ENCODE measurements at regions of chr19 and their contacts with region 1.

Region 1: DNA sequence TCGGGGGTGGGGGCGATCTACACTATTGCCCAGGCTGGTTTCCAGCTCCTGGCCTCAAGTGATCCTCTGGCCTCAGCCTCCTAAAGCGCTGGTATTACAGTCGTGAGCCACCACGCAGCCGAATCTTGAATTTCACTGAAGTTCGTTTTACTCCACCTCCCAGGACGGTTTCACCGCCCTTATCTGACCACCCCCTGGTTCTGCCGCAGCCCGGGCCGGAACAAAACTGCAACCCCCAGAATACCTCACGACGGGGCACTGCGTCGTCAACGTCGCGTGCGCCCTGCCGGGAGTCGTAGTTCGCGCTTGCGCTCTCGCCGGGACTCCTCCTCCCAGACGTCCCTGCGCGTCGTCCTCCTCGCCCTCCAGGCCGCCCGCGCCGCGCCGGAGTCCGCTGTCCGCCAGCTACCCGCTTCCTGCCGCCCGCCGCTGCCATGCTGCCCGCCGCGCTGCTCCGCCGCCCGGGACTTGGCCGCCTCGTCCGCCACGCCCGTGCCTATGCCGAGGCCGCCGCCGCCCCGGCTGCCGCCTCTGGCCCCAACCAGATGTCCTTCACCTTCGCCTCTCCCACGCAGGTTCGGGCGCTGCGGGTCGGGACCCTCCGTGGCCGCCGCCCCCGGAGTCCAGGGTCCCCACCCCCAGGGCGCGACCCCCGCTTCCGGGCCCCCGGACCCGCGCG is at the start of gene ATP5F1D:
- DNase-seq: peak; percentile 93
- H3K4me3 ChIP-seq: peak within 1 kb of the TSS; percentile 85 to 91
- H3K27ac ChIP-seq: peak within 1 kb of the TSS; percentile 55 to 83
- H3K4me1 ChIP-seq: peaks cover 22 to 51% of the 10 kb centered on the region in 2 experiments; a peak in 3 of 4 replicates
- H3K27me3 ChIP-seq: no peaks in the 10 kb centered on the region
- CTCF ChIP-seq: no peak
- EP300 ChIP-seq: no peak
- RAD21 ChIP-seq: no peak
- polyA plus RNA-seq, gene ATP5F1D: 133 and 226 TPM in 2 replicates

Region 2: GRCh38 chr19:1020868-1021425 is 220.6 kb before region 1 on chr19 and contains the start of gene TMEM259:
- CTCF ChIA-PET with region 1: interaction called, 11 read pairs
- POLR2A ChIA-PET with region 1: interaction called, 4 read pairs
- DNase-seq: peak; percentile 99
- H3K4me3 ChIP-seq: peak within 1 kb of the TSS; percentile 69 to 79
- H3K27ac ChIP-seq: peak within 1 kb of the TSS; percentile 73 to 91
- H3K4me1 ChIP-seq: peaks cover 13 to 26% of the 10 kb centered on the region in 2 experiments; a peak in 1 of 4 replicates
- H3K27me3 ChIP-seq: no peaks in the 10 kb centered on the region
- CTCF ChIP-seq: no peak
- EP300 ChIP-seq: no peak; a peak in 1 of 4 replicates
- RAD21 ChIP-seq: no peak
- polyA plus RNA-seq, gene TMEM259: 138 and 145 TPM in 2 replicates

Region 3: DNA sequence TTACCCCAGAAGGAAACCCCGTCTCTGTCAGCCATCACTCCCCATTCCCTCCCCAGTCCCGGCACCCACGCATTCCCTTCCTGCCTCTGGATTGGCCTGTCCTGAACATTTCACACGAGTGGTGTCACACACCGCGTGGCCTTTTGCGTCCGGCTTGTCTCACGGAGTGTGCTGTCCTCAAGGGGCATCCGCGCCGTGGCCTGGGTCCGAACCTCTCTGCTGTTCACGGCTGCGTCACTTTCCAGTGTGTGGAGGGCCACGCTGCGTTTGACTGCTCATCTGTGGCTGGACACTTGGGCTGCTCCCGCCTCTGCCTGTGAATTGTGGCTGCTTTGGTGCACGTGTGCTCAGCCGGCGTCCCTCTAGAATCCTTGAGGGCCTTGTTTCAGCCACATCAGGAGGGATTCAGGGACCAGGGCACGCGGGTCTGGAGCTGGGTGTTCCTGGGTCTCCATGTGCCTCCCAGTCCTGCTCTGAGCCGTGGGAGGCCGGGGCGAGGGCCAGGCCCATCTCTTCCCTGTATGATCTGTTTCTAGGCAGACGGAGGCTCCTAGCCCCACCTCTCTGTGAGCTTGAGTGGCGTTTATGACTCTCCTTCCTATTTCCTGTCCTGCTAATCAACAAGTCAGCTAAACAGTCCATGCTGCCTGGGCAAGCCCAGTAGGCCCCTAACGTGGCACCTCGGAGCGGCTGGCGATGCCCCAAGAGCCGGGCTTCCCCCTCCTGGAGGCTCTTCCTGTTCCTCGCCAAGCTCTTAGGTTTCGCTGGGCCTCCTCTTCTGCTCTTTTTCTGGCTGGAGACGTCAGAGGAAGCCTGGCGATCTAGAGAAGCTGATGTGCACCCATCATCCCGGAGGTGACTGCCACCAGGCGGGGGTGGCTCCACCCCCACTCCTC is 27.9 kb before region 1 on chr19:
- CTCF ChIA-PET with region 1: interaction called, 75 read pairs
- POLR2A ChIA-PET with region 1: interaction called, 3 read pairs
- DNase-seq: peak; percentile 57
- H3K4me3 ChIP-seq: 0 out of 4 replicates have a peak overlapping the region, but pooled peaks of 1 of the 2 experiments have one; percentile 13
- H3K27ac ChIP-seq: peak overlapping the region; percentile 90 to 92
- H3K4me1 ChIP-seq: peaks cover 35 to 39% of the 10 kb centered on the region in 2 experiments; a peak in 3 of 4 replicates
- H3K27me3 ChIP-seq: no peaks in the 10 kb centered on the region
- CTCF ChIP-seq: no peak
- EP300 ChIP-seq: no peak
- RAD21 ChIP-seq: no peak

Region 4: GRCh38 chr19:1223018-1223855 is 18.3 kb before region 1 on chr19:
- CTCF ChIA-PET with region 1: interaction called, 82 read pairs
- POLR2A ChIA-PET with region 1: interaction called, 6 read pairs
- DNase-seq: peak; percentile 76
- H3K4me3 ChIP-seq: no peak overlapping the region; a peak in 1 of 4 replicates
- H3K27ac ChIP-seq: no peak overlapping the region; a peak in 1 of 4 replicates
- H3K4me1 ChIP-seq: peaks cover 0 to 5% of the 10 kb centered on the region in 2 experiments; a peak in 1 of 4 replicates
- H3K27me3 ChIP-seq: no peaks in the 10 kb centered on the region
- CTCF ChIP-seq: peak; percentile 61
- EP300 ChIP-seq: no peak
- RAD21 ChIP-seq: peak; percentile 39; the same call in 1 of the 2 replicates

Region 5: DNA sequence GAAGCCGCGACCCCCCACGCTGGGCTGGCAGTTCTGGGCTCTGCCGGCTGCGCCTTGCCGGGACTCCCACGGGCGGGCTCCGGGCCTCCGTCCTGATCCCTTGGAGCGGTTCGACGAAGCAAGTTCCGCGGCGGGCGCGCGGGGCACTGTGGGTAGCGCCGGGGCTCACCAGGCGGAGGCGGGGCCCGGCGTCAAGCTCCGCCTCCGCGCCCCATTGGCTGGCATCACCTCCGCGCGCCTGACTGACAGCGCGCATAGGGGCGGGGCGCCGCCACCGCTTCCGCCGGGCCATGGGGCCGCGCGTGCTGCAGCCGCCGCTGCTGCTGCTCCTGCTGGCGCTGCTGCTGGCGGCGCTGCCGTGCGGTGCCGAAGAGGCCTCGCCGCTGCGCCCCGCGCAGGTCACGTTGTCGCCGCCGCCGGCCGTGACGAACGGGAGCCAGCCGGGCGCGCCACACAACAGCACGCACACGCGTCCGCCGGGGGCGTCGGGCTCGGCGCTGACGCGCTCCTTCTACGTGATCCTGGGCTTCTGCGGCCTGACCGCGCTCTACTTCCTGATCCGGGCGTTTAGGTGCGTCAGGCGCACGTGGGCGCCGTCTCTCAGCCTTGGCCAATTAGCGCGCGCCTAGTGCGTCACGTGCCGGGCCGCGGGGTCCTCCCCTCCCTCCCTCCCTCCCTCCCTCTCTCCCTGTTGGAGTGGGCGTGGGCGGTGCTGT is 33.9 kb after region 1 on chr19 and contains the start of gene FAM174C:
- CTCF ChIA-PET with region 1: interaction called, 62 read pairs
- POLR2A ChIA-PET with region 1: interaction called, 8 read pairs
- DNase-seq: peak; percentile 97
- H3K4me3 ChIP-seq: peak within 1 kb of the TSS; percentile 72 to 76
- H3K27ac ChIP-seq: peak within 1 kb of the TSS; percentile 92 to 99
- H3K4me1 ChIP-seq: peaks cover 28 to 42% of the 10 kb centered on the region in 2 experiments; a peak in 1 of 4 replicates
- H3K27me3 ChIP-seq: no peaks in the 10 kb centered on the region
- CTCF ChIP-seq: no peak
- EP300 ChIP-seq: no peak
- RAD21 ChIP-seq: no peak
- polyA plus RNA-seq, gene FAM174C: 53.5 and 78.0 TPM in 2 replicates

Region 6: GRCh38 chr19:1373534-1374249 is 132.1 kb after region 1 on chr19:
- CTCF ChIA-PET with region 1: interaction called, 11 read pairs
- POLR2A ChIA-PET with region 1: no interaction called
- DNase-seq: no peak
- H3K4me3 ChIP-seq: no peak overlapping the region
- H3K27ac ChIP-seq: no peak overlapping the region
- H3K4me1 ChIP-seq: no peaks in the 10 kb centered on the region
- H3K27me3 ChIP-seq: no peaks in the 10 kb centered on the region
- CTCF ChIP-seq: no peak
- EP300 ChIP-seq: no peak
- RAD21 ChIP-seq: no peak

Region 7: DNA sequence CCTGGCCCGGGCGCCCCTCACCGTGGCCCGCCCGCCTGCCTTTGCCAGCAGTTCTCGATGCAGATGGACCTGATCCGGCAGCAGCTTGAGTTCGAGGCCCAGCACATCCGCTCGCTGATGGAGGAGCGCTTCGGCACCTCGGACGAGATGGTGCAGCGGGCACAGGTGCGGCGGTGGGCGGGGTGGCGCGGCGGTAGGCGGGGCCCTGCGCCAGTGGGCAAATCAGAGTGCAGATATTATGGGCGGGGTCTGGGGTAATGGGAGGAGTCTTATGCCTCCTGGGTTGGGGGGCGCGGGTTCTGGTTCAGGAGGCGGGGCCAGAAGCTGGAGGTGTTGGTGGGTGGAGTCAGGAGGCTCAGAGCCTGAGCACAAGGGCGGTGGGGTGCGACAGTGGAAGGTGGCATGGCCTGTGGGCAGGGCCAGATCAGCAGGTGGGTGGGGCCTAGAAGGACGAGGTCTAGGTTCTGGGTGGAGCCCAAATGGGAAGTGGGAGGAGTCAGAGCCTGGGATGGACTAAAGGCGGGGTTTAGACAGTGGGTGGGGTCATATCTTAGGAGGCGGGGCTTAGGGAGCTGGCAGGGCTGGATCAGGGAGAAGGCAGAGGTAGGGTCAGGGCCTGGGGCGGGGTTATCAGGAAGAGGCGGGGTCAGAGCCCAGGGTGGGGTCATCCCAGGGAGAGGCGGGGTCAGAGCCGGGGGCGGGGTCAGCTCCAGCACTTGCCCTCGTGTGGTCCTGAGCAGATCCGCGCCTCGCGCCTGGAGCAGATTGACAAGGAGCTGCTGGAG is 214.0 kb after region 1 on chr19:
- CTCF ChIA-PET with region 1: no interaction called
- POLR2A ChIA-PET with region 1: no interaction called
- DNase-seq: peak; percentile 94
- H3K4me3 ChIP-seq: no peak overlapping the region
- H3K27ac ChIP-seq: no peak overlapping the region; a peak in 1 of 4 replicates
- H3K4me1 ChIP-seq: peaks cover 0 to 26% of the 10 kb centered on the region in 2 experiments; a peak in 1 of 4 replicates
- H3K27me3 ChIP-seq: no peaks in the 10 kb centered on the region
- CTCF ChIP-seq: no peak
- EP300 ChIP-seq: no peak
- RAD21 ChIP-seq: no peak